GM12878 (cell line): ENCODE measurements at regions of chr2 and their contacts with region 1.

Region 1: GRCh38 chr2:54522624-54523281 is 66.6 kb downstream of the SPTBN1 start:
- DNase-seq: peak; percentile 47
- ATAC-seq: peak; percentile 94
- H3K4me3 ChIP-seq: no peak overlapping the region
- H3K27ac ChIP-seq: no peak overlapping the region
- H3K4me1 ChIP-seq: peaks cover 15% of the 10 kb centered on the region
- H3K27me3 ChIP-seq: no peaks in the 10 kb centered on the region
- CTCF ChIP-seq: peak; percentile 71 to 84 (median 72)
- EP300 ChIP-seq: no peak
- POLR2A ChIP-seq: no peak
- RAD21 ChIP-seq: peak; percentile 93

Region 2: DNA sequence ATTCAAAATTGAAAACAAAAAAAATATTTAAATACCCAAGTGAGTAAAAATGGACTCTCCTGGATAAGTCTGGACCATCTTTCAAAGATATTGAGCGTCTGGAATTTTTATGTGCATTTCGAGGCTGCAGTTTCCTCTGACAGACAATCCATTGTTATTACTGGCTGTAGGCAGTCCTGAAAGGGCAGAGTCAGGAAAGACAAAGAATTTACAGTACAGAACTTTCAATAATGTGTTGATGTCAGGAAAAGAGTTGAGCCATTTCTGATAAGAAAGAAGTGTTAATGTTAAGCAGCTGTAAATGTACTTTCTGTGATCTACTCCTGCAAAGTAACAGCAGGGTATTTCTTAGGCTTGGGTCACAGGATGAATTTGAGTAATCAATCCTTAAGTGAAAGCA is 296.5 kb before region 1 on chr2:
- CTCF ChIA-PET with region 1: no interaction called
- POLR2A ChIA-PET with region 1: no interaction called
- RAD21 ChIA-PET with region 1: no interaction called
- SMC1A ChIA-PET with region 1: no interaction called
- in situ Hi-C with region 1: no loop called
- intact Hi-C with region 1: no loop called
- DNase-seq: no peak
- ATAC-seq: no peak
- H3K4me3 ChIP-seq: no peak overlapping the region
- H3K27ac ChIP-seq: no peak overlapping the region
- H3K4me1 ChIP-seq: no peaks in the 10 kb centered on the region
- H3K27me3 ChIP-seq: no peaks in the 10 kb centered on the region
- CTCF ChIP-seq: no peak
- EP300 ChIP-seq: no peak
- POLR2A ChIP-seq: no peak
- RAD21 ChIP-seq: no peak

Region 3: GRCh38 chr2:54551123-54551756 is 28.5 kb after region 1 on chr2:
- CTCF ChIA-PET with region 1: interaction called, 15 read pairs
- POLR2A ChIA-PET with region 1: interaction called, 43 read pairs
- RAD21 ChIA-PET with region 1: interaction called, 157 read pairs
- SMC1A ChIA-PET with region 1: interaction called, 42 read pairs
- in situ Hi-C with region 1: no loop called
- intact Hi-C with region 1: no loop called
- DNase-seq: no peak
- ATAC-seq: peak; percentile 58
- H3K4me3 ChIP-seq: no peak overlapping the region
- H3K27ac ChIP-seq: no peak overlapping the region
- H3K4me1 ChIP-seq: peaks cover 17% of the 10 kb centered on the region
- H3K27me3 ChIP-seq: no peaks in the 10 kb centered on the region
- CTCF ChIP-seq: no peak
- EP300 ChIP-seq: no peak
- POLR2A ChIP-seq: no peak
- RAD21 ChIP-seq: no peak

Region 4: DNA sequence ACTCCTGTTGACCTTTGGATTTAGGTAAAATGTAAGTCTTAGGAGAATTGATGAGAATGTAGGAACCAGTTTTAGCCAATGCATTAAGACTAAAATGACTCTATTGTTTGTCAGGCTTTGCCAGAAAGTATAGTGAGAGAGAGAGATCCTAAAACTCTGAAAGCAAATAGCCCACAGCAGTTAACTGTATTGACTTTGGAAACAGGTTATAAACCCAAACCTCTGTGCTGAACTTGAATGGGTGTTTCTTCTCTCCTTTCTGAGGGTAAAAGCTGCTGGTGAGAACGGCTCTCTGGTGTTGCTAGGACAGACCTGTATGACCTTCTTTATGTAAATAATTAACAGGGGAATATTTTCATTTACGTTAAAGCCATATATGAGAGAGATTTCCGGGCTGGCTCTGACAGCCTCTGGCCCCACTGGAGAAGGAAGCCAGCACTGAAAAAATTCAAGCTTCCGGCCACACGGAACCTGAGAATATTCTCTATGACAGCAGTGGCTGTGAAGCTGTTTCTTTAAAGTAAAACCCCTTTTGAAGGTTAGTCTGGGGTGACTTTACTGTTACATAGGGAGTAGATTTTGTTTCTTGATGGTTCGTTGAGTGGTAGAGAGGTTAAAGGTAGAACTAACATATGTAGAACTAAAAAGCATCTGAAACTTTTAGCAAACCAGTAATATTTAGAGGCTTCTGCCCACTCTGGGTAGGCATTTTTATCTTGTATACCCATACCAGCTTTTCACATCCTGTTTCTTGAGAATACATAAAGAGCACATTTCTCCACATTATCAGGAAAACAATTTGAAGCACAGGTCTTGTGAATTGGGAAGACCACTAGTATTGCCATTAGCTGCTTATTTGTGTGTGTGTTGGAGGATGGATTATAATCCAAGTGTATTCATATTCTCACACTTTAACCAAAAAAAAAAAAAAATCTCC is 57.2 kb after region 1 on chr2:
- CTCF ChIA-PET with region 1: interaction called, 29 read pairs
- POLR2A ChIA-PET with region 1: interaction called, 10 read pairs
- RAD21 ChIA-PET with region 1: interaction called, 56 read pairs
- SMC1A ChIA-PET with region 1: interaction called, 29 read pairs
- in situ Hi-C with region 1: no loop called
- intact Hi-C with region 1: no loop called
- DNase-seq: peak; percentile 89
- ATAC-seq: peak; percentile 82
- H3K4me3 ChIP-seq: peak overlapping the region; percentile 45
- H3K27ac ChIP-seq: peak overlapping the region; percentile 95
- H3K4me1 ChIP-seq: peaks cover 81% of the 10 kb centered on the region
- H3K27me3 ChIP-seq: no peaks in the 10 kb centered on the region
- CTCF ChIP-seq: no peak
- EP300 ChIP-seq: 0 out of 4 replicates have a peak, but pooled peaks have one; percentile 39 to 69
- POLR2A ChIP-seq: no peak
- RAD21 ChIP-seq: peak; percentile 13; the same call in 1 of the 2 replicates

Region 5: GRCh38 chr2:54634564-54635511 is 112.1 kb after region 1 on chr2:
- CTCF ChIA-PET with region 1: interaction called, 31 read pairs
- POLR2A ChIA-PET with region 1: interaction called, 16 read pairs
- RAD21 ChIA-PET with region 1: interaction called, 37 read pairs
- SMC1A ChIA-PET with region 1: interaction called, 23 read pairs
- in situ Hi-C with region 1: no loop called
- intact Hi-C with region 1: loop called (anchors 2 kb)
- DNase-seq: peak; percentile 93
- ATAC-seq: peak; percentile 81
- H3K4me3 ChIP-seq: peak overlapping the region; percentile 38
- H3K27ac ChIP-seq: peak overlapping the region; percentile 95
- H3K4me1 ChIP-seq: peaks cover 57% of the 10 kb centered on the region
- H3K27me3 ChIP-seq: no peaks in the 10 kb centered on the region
- CTCF ChIP-seq: no peak
- EP300 ChIP-seq: peak; percentile 81 to 84; a peak in 2 of 4 replicates
- POLR2A ChIP-seq: peak; percentile 52
- RAD21 ChIP-seq: 0 out of 2 replicates have a peak, but pooled peaks have one; percentile 0

Region 6: GRCh38 chr2:54673501-54673998 is 150.8 kb after region 1 on chr2:
- CTCF ChIA-PET with region 1: interaction called, 11 read pairs
- POLR2A ChIA-PET with region 1: interaction called, 3 read pairs
- RAD21 ChIA-PET with region 1: interaction called, 28 read pairs
- SMC1A ChIA-PET with region 1: interaction called, 26 read pairs
- in situ Hi-C with region 1: no loop called
- intact Hi-C with region 1: no loop called
- DNase-seq: no peak
- ATAC-seq: peak; percentile 76
- H3K4me3 ChIP-seq: no peak overlapping the region
- H3K27ac ChIP-seq: peak overlapping the region; percentile 70
- H3K4me1 ChIP-seq: peaks cover 20% of the 10 kb centered on the region
- H3K27me3 ChIP-seq: no peaks in the 10 kb centered on the region
- CTCF ChIP-seq: no peak
- EP300 ChIP-seq: no peak
- POLR2A ChIP-seq: no peak
- RAD21 ChIP-seq: no peak

Region 7: DNA sequence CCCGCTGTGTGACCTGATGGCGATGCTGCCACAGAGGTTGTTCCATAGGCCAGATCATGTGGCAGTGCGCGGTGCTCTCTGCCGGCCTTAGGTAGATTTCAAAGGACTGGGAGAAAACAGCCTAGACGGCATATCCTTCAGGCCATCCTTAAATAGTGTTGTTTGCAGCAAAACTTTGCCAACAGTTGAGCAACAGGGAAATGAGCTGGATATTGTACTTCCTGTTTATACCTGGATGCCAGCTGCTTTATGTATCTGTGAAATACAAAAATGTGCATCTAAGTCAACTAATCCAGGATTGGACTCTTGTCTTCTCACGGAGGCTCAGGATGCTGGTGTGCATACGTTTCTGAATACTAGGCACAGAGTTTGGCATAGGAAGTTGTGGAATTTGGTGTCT is 307.8 kb after region 1 on chr2:
- CTCF ChIA-PET with region 1: interaction called, 3 read pairs
- POLR2A ChIA-PET with region 1: no interaction called
- RAD21 ChIA-PET with region 1: no interaction called
- SMC1A ChIA-PET with region 1: no interaction called
- in situ Hi-C with region 1: loop called (anchors 10 kb)
- intact Hi-C with region 1: loop called (anchors 2 kb)
- DNase-seq: no peak
- ATAC-seq: no peak
- H3K4me3 ChIP-seq: no peak overlapping the region
- H3K27ac ChIP-seq: no peak overlapping the region
- H3K4me1 ChIP-seq: no peaks in the 10 kb centered on the region
- H3K27me3 ChIP-seq: peaks cover 0 to 3% of the 10 kb centered on the region in 2 experiments; a peak in 1 of 4 replicates
- CTCF ChIP-seq: no peak
- EP300 ChIP-seq: no peak
- POLR2A ChIP-seq: no peak
- RAD21 ChIP-seq: no peak

Region 8: DNA sequence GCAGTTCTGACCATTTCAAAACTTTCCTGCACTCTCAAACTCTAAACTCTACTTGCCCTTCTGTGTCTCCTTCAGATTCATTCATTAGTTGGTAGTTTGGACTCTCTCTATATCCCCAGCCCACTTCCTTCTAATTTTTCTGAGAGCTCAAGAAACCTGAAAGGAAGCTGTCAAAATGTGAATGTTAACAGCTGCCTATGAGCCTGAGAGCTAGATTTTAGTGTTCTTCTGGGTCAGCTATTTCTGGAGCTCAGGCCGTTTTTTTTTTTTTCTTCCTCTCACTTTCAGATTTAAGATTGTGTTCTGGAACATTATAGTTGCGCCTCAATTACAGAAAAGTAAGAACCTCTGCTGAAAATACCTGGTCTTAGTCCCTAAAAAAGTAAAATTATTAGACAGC is 454.4 kb after region 1 on chr2:
- CTCF ChIA-PET with region 1: no interaction called
- POLR2A ChIA-PET with region 1: no interaction called
- RAD21 ChIA-PET with region 1: no interaction called
- SMC1A ChIA-PET with region 1: no interaction called
- in situ Hi-C with region 1: no loop called
- intact Hi-C with region 1: no loop called
- DNase-seq: peak; percentile 77
- ATAC-seq: peak; percentile 93
- H3K4me3 ChIP-seq: peak overlapping the region; percentile 53; the same call in 1 of the 2 replicates
- H3K27ac ChIP-seq: peak overlapping the region; percentile 74
- H3K4me1 ChIP-seq: peaks cover 26% of the 10 kb centered on the region
- H3K27me3 ChIP-seq: no peaks in the 10 kb centered on the region
- CTCF ChIP-seq: no peak
- EP300 ChIP-seq: peak in 1 of 2 experiments; percentile 23; a peak in 1 of 4 replicates
- POLR2A ChIP-seq: no peak
- RAD21 ChIP-seq: no peak; the same call in 1 of the 2 replicates